ENCODE measurements at regions of chr6 and their contacts with region 1.

Region 1: GRCh38 chr6:143940011-143940597 is 68.0 kb downstream of the PLAGL1 start:
- DNase-seq: peak; percentile 76
- ATAC-seq: peak; percentile 83
- H3K4me3 Mint-ChIP-seq: no peak overlapping the region
- H3K27ac Mint-ChIP-seq: peak overlapping the region; percentile 11
- H3K4me1 Mint-ChIP-seq: peaks cover 16% of the 10 kb centered on the region
- H3K27me3 Mint-ChIP-seq: peaks cover 10% of the 10 kb centered on the region

Region 2: DNA sequence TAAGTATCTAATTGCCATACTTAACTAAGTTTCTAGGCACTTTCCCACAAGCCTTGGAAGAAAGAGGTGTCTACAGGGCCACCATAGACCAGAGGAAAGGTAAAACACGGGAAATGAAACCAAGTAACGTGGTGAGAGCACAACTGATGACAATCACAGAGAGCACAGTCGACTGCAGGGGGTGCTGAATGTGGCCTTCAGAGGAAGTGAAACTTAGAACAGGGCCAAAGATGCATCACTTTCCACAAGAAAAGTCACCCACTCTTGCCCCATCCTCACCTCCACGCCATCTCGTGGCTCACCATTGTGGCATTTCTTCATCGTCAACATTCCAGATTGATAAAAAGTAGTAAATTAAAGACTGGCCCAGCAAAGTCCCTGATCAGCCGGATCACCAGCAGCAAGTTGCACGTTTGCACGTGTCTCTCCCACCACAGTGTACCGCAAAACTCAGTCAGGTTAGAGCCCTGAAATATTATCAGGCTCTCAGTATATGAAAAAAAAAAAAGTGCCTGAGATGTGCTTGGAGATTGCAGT is 1026.5 kb before region 1 on chr6:
- CTCF ChIA-PET with region 1: no interaction called
- DNase-seq: peak; percentile 89
- ATAC-seq: peak; percentile 91
- H3K4me3 Mint-ChIP-seq: peak overlapping the region; percentile 73
- H3K27ac Mint-ChIP-seq: peak overlapping the region; percentile 99
- H3K4me1 Mint-ChIP-seq: peaks cover 69% of the 10 kb centered on the region
- H3K27me3 Mint-ChIP-seq: no peaks in the 10 kb centered on the region

Region 3: DNA sequence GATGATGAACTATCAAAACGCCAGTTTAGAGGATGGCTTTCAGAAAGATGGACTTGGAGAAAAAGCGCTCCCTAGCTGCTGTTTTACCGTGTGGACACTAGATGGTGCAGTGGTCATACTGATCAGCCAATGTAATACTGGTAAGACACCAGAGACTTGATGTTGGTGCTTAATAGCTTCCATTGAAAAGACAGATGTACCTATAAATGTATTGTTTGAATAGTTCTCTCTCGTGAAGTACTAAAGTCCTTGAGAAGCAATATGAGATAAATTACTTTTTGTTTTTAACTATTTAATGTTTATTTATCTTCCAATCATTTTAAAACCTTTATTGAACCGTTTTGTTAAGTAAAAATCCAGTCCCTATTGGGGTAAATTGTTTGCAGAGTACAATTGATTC is 364.7 kb before region 1 on chr6:
- CTCF ChIA-PET with region 1: interaction called, 15 read pairs
- DNase-seq: peak; percentile 59
- ATAC-seq: peak; percentile 77
- H3K4me3 Mint-ChIP-seq: no peak overlapping the region
- H3K27ac Mint-ChIP-seq: no peak overlapping the region
- H3K4me1 Mint-ChIP-seq: peaks cover 4% of the 10 kb centered on the region
- H3K27me3 Mint-ChIP-seq: peaks cover 6% of the 10 kb centered on the region

Region 4: GRCh38 chr6:143952060-143952778 is 12.1 kb after region 1 on chr6:
- CTCF ChIA-PET with region 1: interaction called, 10 read pairs
- DNase-seq: no peak
- ATAC-seq: no peak
- H3K4me3 Mint-ChIP-seq: no peak overlapping the region
- H3K27ac Mint-ChIP-seq: no peak overlapping the region
- H3K4me1 Mint-ChIP-seq: no peaks in the 10 kb centered on the region
- H3K27me3 Mint-ChIP-seq: no peaks in the 10 kb centered on the region

Region 5: GRCh38 chr6:144013486-144013909 is 73.4 kb after region 1 on chr6:
- CTCF ChIA-PET with region 1: interaction called, 85 read pairs
- DNase-seq: peak; percentile 69
- ATAC-seq: peak; percentile 45
- H3K4me3 Mint-ChIP-seq: no peak overlapping the region
- H3K27ac Mint-ChIP-seq: no peak overlapping the region
- H3K4me1 Mint-ChIP-seq: peaks cover 2% of the 10 kb centered on the region
- H3K27me3 Mint-ChIP-seq: peaks cover 15% of the 10 kb centered on the region

Region 6: DNA sequence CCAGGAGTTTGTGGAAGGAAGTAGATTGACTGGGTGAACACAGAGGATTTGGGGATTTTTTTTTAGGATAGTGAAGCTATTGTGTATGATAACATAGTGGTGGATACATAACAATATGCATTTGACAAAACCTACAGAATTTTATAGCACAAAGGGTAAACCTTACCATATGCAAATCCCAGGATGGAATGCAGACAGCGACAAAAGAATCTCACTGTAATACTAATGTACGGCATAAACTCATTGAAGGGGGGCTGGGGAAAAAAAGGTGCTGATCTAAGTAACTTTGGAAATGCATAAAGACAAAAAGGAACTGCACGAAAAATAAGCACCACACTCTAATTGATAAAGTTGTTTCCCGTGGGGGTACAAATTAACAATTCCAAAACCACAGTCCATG is 83.1 kb after region 1 on chr6:
- CTCF ChIA-PET with region 1: interaction called, 14 read pairs
- DNase-seq: no peak
- ATAC-seq: no peak
- H3K4me3 Mint-ChIP-seq: no peak overlapping the region
- H3K27ac Mint-ChIP-seq: no peak overlapping the region
- H3K4me1 Mint-ChIP-seq: no peaks in the 10 kb centered on the region
- H3K27me3 Mint-ChIP-seq: no peaks in the 10 kb centered on the region

Region 7: GRCh38 chr6:144036064-144036834 is 96.1 kb after region 1 on chr6:
- CTCF ChIA-PET with region 1: interaction called, 15 read pairs
- DNase-seq: peak; percentile 57
- ATAC-seq: peak; percentile 88
- H3K4me3 Mint-ChIP-seq: peak overlapping the region; percentile 33
- H3K27ac Mint-ChIP-seq: peak overlapping the region; percentile 21
- H3K4me1 Mint-ChIP-seq: peaks cover 18% of the 10 kb centered on the region
- H3K27me3 Mint-ChIP-seq: no peaks in the 10 kb centered on the region

Region 8: GRCh38 chr6:144195679-144196270 is 255.7 kb after region 1 on chr6:
- CTCF ChIA-PET with region 1: no interaction called
- DNase-seq: no peak
- ATAC-seq: no peak
- H3K4me3 Mint-ChIP-seq: no peak overlapping the region
- H3K27ac Mint-ChIP-seq: no peak overlapping the region
- H3K4me1 Mint-ChIP-seq: peaks cover 11% of the 10 kb centered on the region
- H3K27me3 Mint-ChIP-seq: no peaks in the 10 kb centered on the region

Measured in activated CD8-positive, alpha-beta memory T cell treated with anti-CD3 and anti-CD28 coated beads, Interleukin-2, amount 10 ng/mL, durations not matched to agents 7 days and 5 days (primary cell).